CD4-positive, alpha-beta memory T cell (primary cell): ENCODE measurements at regions of chr3 and their contacts with region 1.

Region 1: GRCh38 chr3:149969940-149970715 is 567 bp downstream of the PFN2 start:
- DNase-seq: peak; percentile 72 to 80 (median 77)
- H3K4me3 ChIP-seq: peak overlapping the region; percentile 8 to 44
- H3K4me3 Mint-ChIP-seq: peak overlapping the region; percentile 89 to 96 (median 90)
- H3K27ac ChIP-seq: peak overlapping the region; percentile 27
- H3K27ac Mint-ChIP-seq: peak overlapping the region; percentile 73 to 91 (median 87)
- H3K4me1 ChIP-seq: peaks cover 12% of the 10 kb centered on the region
- H3K4me1 Mint-ChIP-seq: peaks cover 14 to 20% (median 19%) of the 10 kb centered on the region in 4 donors
- H3K27me3 ChIP-seq: peaks cover 7% of the 10 kb centered on the region
- H3K27me3 Mint-ChIP-seq: peaks cover 7 to 15% of the 10 kb centered on the region in 2 donors

Region 2: DNA sequence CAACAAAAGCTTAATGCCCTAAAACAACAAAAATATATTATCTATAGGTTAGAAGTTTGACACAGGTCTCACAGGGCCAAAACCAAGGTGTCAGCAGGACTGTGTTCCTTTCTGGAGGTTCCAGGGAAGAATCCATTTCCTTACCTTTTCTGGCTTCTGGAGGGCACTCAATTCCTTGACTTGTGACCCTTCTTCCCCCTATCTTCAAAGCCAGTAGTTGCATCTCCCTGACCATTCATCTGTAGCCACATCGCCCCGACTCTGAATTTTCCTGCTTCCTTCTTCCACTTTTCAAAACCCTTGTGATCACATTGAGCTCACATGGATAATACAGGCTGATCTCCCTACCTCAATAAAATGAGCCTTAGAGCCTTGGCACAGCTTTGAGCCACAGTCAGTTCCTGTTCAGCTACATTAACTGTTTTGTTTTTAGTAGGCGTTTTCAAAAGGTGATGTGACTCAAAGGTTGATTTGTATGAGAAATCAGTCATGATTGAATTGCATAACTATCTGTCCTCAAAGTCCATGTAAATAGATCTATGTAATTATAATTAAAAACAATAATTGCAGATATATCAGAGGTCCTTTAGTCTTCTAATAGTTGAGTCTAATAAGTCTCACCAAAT is 11.8 kb before region 1 on chr3:
- CTCF ChIA-PET with region 1: interaction called, 30 read pairs
- POLR2A ChIA-PET with region 1: interaction called, 3 read pairs
- intact Hi-C with region 1: no loop called
- DNase-seq: no peak
- H3K4me3 ChIP-seq: no peak overlapping the region
- H3K4me3 Mint-ChIP-seq: no peak overlapping the region
- H3K27ac ChIP-seq: no peak overlapping the region
- H3K27ac Mint-ChIP-seq: peak overlapping the region in 3 of 7 donors; percentile 1 to 5 (median 2)
- H3K4me1 ChIP-seq: peaks cover 16% of the 10 kb centered on the region
- H3K4me1 Mint-ChIP-seq: peaks cover 16 to 27% (median 17%) of the 10 kb centered on the region in 4 donors
- H3K27me3 ChIP-seq: no peaks in the 10 kb centered on the region
- H3K27me3 Mint-ChIP-seq: no peaks in the 10 kb centered on the region

Region 3: GRCh38 chr3:150079029-150079739 is 109.1 kb after region 1 on chr3:
- CTCF ChIA-PET with region 1: no interaction called
- POLR2A ChIA-PET with region 1: no interaction called
- intact Hi-C with region 1: no loop called
- DNase-seq: no peak
- H3K4me3 ChIP-seq: no peak overlapping the region
- H3K4me3 Mint-ChIP-seq: no peak overlapping the region
- H3K27ac ChIP-seq: no peak overlapping the region
- H3K27ac Mint-ChIP-seq: no peak overlapping the region
- H3K4me1 ChIP-seq: no peaks in the 10 kb centered on the region
- H3K4me1 Mint-ChIP-seq: no peaks in the 10 kb centered on the region
- H3K27me3 ChIP-seq: no peaks in the 10 kb centered on the region
- H3K27me3 Mint-ChIP-seq: peaks cover 2 to 5% of the 10 kb centered on the region in 2 donors

Region 4: GRCh38 chr3:150220799-150221198 is 250.7 kb after region 1 on chr3:
- CTCF ChIA-PET with region 1: interaction called, 33 read pairs
- POLR2A ChIA-PET with region 1: no interaction called
- intact Hi-C with region 1: loop called (anchors 1 kb)
- DNase-seq: no peak
- H3K4me3 ChIP-seq: no peak overlapping the region
- H3K4me3 Mint-ChIP-seq: no peak overlapping the region
- H3K27ac ChIP-seq: no peak overlapping the region
- H3K27ac Mint-ChIP-seq: no peak overlapping the region
- H3K4me1 ChIP-seq: peaks cover 5% of the 10 kb centered on the region
- H3K4me1 Mint-ChIP-seq: peaks cover 0 to 4% (median 2%) of the 10 kb centered on the region in 4 donors
- H3K27me3 ChIP-seq: peaks cover 9% of the 10 kb centered on the region
- H3K27me3 Mint-ChIP-seq: peaks cover 25 to 49% of the 10 kb centered on the region in 2 donors

Region 5: DNA sequence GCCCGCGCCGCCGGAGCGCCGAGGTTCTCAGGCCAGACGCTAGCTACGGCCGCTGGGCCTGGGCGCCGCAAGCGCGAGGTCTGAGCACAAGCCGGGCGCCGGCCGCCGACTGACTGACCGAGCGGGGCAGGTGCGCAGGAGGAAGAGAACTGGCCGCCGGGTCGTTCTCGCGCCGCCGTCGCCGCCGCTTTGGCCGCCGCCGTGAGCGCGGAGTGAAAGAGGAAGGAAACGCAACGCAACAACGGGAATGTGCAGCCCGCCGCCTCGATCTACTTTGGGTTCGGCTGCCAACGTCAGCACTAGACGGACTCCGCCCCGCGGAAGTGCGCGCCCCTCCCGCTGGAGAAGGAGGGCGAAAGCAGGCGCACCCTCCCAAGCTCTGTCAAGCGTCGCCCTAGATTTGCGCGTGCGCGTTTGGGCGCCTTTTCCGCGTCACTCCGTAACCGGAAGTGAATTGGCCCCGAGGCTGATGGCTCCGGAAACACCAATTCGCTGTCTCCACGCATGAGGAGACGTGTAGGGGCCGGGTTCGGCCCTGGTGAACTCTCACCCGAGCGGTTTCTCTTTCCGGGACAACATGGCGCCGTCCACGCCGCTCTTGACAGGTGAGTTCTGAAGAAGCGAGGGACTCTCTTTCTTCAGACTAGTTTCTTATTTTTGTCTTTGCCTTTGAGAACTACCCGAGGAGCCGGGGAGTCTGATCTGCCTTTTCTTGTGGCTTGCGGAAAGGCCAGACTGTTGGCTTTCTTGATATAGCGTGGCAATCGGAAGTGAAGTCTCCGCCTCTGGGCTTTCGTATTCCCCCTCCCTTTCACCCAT is 576.3 kb after region 1 on chr3 and contains the starts of genes EIF2A and SERP1:
- CTCF ChIA-PET with region 1: no interaction called
- POLR2A ChIA-PET with region 1: no interaction called
- intact Hi-C with region 1: loop called (anchors 5 kb)
- DNase-seq: peak; percentile 99 to 100 (median 100)
- H3K4me3 ChIP-seq: peak within 1 kb of the TSS; percentile 77 to 89
- H3K4me3 Mint-ChIP-seq: peak within 1 kb of the TSS; percentile 92 to 99 (median 97)
- H3K27ac ChIP-seq: peak within 1 kb of the TSS; percentile 99
- H3K27ac Mint-ChIP-seq: peak within 1 kb of the TSS; percentile 95 to 100 (median 99)
- H3K4me1 ChIP-seq: peaks cover 62% of the 10 kb centered on the region
- H3K4me1 Mint-ChIP-seq: peaks cover 39 to 81% (median 61%) of the 10 kb centered on the region in 4 donors
- H3K27me3 ChIP-seq: no peaks in the 10 kb centered on the region
- H3K27me3 Mint-ChIP-seq: no peaks in the 10 kb centered on the region
- total RNA-seq, gene EIF2A: 90.8 to 95.3 TPM
- total RNA-seq, gene SERP1: 122 to 128 TPM

Region 6: GRCh38 chr3:150620002-150620689 is 650.0 kb after region 1 on chr3:
- CTCF ChIA-PET with region 1: no interaction called
- POLR2A ChIA-PET with region 1: no interaction called
- intact Hi-C with region 1: no loop called
- DNase-seq: no peak
- H3K4me3 ChIP-seq: no peak overlapping the region
- H3K4me3 Mint-ChIP-seq: peak overlapping the region in 1 of 8 donors; percentile 48
- H3K27ac ChIP-seq: no peak overlapping the region
- H3K27ac Mint-ChIP-seq: peak overlapping the region in 4 of 7 donors; percentile 8 to 85 (median 44)
- H3K4me1 ChIP-seq: peaks cover 57% of the 10 kb centered on the region
- H3K4me1 Mint-ChIP-seq: peaks cover 36 to 67% (median 47%) of the 10 kb centered on the region in 4 donors
- H3K27me3 ChIP-seq: no peaks in the 10 kb centered on the region
- H3K27me3 Mint-ChIP-seq: no peaks in the 10 kb centered on the region

Region 7: DNA sequence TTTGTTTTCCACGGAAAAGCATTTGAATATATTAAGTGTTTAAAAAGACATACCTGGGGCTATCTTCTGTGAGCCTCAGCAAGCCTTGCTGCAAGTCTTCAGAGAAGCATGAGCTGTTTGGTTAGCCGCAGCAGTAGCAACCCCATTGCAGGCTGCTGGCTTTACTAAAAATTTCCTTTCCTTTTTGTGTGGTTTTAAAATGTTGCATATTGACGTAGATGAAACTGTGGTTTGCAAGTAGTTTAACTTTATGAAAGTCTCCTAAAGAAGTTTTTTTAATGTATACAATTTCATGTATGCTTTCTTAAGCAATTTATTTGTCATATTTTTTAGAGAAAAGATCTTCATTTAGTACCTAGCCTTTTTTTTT is 1232.9 kb after region 1 on chr3 and contains the start of gene GPR171:
- CTCF ChIA-PET with region 1: no interaction called
- POLR2A ChIA-PET with region 1: no interaction called
- intact Hi-C with region 1: loop called (anchors 5 kb)
- DNase-seq: peak; percentile 80 to 87 (median 82)
- H3K4me3 ChIP-seq: peak within 1 kb of the TSS; percentile 59 to 63
- H3K4me3 Mint-ChIP-seq: peak within 1 kb of the TSS; percentile 73 to 89 (median 86)
- H3K27ac ChIP-seq: peak within 1 kb of the TSS; percentile 75
- H3K27ac Mint-ChIP-seq: peak within 1 kb of the TSS; percentile 87 to 98 (median 97)
- H3K4me1 ChIP-seq: peaks cover 83% of the 10 kb centered on the region
- H3K4me1 Mint-ChIP-seq: peaks cover 45 to 94% (median 59%) of the 10 kb centered on the region in 4 donors
- H3K27me3 ChIP-seq: no peaks in the 10 kb centered on the region
- H3K27me3 Mint-ChIP-seq: no peaks in the 10 kb centered on the region
- total RNA-seq, gene GPR171: 116 to 129 TPM